ENCODE measurements at regions of chr9 and their contacts with region 1.

Region 1: DNA sequence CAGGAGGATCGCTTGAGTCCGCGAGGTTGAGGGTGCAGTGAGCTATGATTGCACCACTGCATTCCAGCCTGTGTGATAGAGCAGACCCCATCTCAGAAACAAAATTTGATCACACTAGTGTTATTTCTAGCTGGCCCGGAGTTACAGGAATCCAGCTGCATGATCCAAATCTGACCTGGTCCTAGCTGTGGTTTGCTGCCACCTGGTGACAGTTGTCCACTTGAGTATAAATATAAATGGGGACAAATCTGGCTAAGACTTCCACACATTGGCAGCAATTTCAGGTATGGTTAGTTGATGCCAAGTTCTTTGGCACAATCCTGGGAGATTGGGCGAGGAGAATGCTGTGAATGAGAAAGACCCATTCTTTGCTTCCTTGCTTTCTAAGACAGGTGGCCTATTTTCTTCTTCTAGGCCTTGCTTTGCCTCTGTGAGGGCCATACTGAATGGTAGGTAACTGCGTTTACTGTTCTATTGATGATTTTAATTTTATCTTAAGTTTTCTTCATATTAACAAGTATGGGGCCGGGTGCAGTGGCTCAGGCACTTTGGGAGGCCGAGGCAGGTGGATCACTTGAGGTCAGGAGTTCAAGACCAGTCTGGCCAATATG is 35.4 kb downstream of the UBE2R2 start:
- DNase-seq: peak; percentile 65 to 73
- H3K4me3 ChIP-seq: no peak overlapping the region
- H3K4me3 Mint-ChIP-seq: no peak overlapping the region
- H3K27ac Mint-ChIP-seq: no peak overlapping the region
- H3K4me1 ChIP-seq: peaks cover 2% of the 10 kb centered on the region; the same call in 1 of the 2 replicates
- H3K4me1 Mint-ChIP-seq: peaks cover 23% of the 10 kb centered on the region
- H3K27me3 ChIP-seq: no peaks in the 10 kb centered on the region
- H3K27me3 Mint-ChIP-seq: no peaks in the 10 kb centered on the region
- CTCF ChIP-seq: peak; percentile 60 to 69

Region 2: GRCh38 chr9:33785913-33786312 is 66.4 kb before region 1 on chr9:
- CTCF ChIA-PET with region 1: no interaction called
- POLR2A ChIA-PET with region 1: no interaction called
- intact Hi-C with region 1: loop called (anchors 1 kb)
- DNase-seq: peak in 1 of 2 experiments; percentile 29
- H3K4me3 ChIP-seq: no peak overlapping the region
- H3K4me3 Mint-ChIP-seq: no peak overlapping the region
- H3K27ac Mint-ChIP-seq: no peak overlapping the region
- H3K4me1 ChIP-seq: no peaks in the 10 kb centered on the region
- H3K4me1 Mint-ChIP-seq: no peaks in the 10 kb centered on the region
- H3K27me3 ChIP-seq: no peaks in the 10 kb centered on the region
- H3K27me3 Mint-ChIP-seq: no peaks in the 10 kb centered on the region
- CTCF ChIP-seq: peak; percentile 27 to 41

Measured in Caco-2 (cell line).